Mammary epithelial cell (primary cell): ENCODE measurements at regions of chr2 and their contacts with region 1.

Region 1: GRCh38 chr2:218186355-218186766 is 19.6 kb upstream of the CXCR1 start:
- DNase-seq: peak; percentile 57
- H3K4me3 ChIP-seq: no peak overlapping the region
- H3K27ac ChIP-seq: no peak overlapping the region
- H3K4me1 ChIP-seq: peaks cover 4% of the 10 kb centered on the region
- H3K27me3 ChIP-seq: no peaks in the 10 kb centered on the region
- CTCF ChIP-seq: peak; percentile 82 to 84

Region 2: GRCh38 chr2:218130377-218130776 is 56.0 kb before region 1 on chr2:
- CTCF ChIA-PET with region 1: no interaction called
- dilution Hi-C with region 1: no loop called
- in situ Hi-C with region 1: no loop called
- intact Hi-C with region 1: no loop called
- DNase-seq: no peak
- H3K4me3 ChIP-seq: no peak overlapping the region
- H3K27ac ChIP-seq: no peak overlapping the region
- H3K4me1 ChIP-seq: peaks cover 8% of the 10 kb centered on the region
- H3K27me3 ChIP-seq: no peaks in the 10 kb centered on the region
- CTCF ChIP-seq: no peak

Region 3: GRCh38 chr2:218145125-218145524 is 41.2 kb before region 1 on chr2:
- CTCF ChIA-PET with region 1: no interaction called
- dilution Hi-C with region 1: no loop called
- in situ Hi-C with region 1: no loop called
- intact Hi-C with region 1: no loop called
- DNase-seq: no peak
- H3K4me3 ChIP-seq: no peak overlapping the region
- H3K27ac ChIP-seq: no peak overlapping the region
- H3K4me1 ChIP-seq: peaks cover 8% of the 10 kb centered on the region
- H3K27me3 ChIP-seq: no peaks in the 10 kb centered on the region
- CTCF ChIP-seq: no peak

Region 4: GRCh38 chr2:218216674-218217359 is 30.5 kb after region 1 on chr2 and contains the start of gene ARPC2:
- CTCF ChIA-PET with region 1: no interaction called
- dilution Hi-C with region 1: no loop called
- in situ Hi-C with region 1: no loop called
- intact Hi-C with region 1: loop called (anchors 2 kb)
- DNase-seq: peak; percentile 91
- H3K4me3 ChIP-seq: peak within 1 kb of the TSS; percentile 84 to 92 (median 91)
- H3K27ac ChIP-seq: peak within 1 kb of the TSS; percentile 84
- H3K4me1 ChIP-seq: peaks cover 29% of the 10 kb centered on the region
- H3K27me3 ChIP-seq: no peaks in the 10 kb centered on the region
- CTCF ChIP-seq: no peak
- total RNA-seq, gene ARPC2: 523 to 644 TPM

Region 5: GRCh38 chr2:218257390-218257981 is 71.1 kb after region 1 on chr2:
- CTCF ChIA-PET with region 1: no interaction called
- dilution Hi-C with region 1: no loop called
- in situ Hi-C with region 1: loop called (anchors 10 kb)
- intact Hi-C with region 1: loop called (anchors 1 kb)
- DNase-seq: no peak
- H3K4me3 ChIP-seq: no peak overlapping the region
- H3K27ac ChIP-seq: no peak overlapping the region
- H3K4me1 ChIP-seq: no peaks in the 10 kb centered on the region
- H3K27me3 ChIP-seq: no peaks in the 10 kb centered on the region
- CTCF ChIP-seq: peak; percentile 53 to 63

Region 6: GRCh38 chr2:218269899-218270720 is 83.7 kb after region 1 on chr2 and contains the starts of genes AAMP and PNKD:
- CTCF ChIA-PET with region 1: no interaction called
- dilution Hi-C with region 1: no loop called
- in situ Hi-C with region 1: no loop called
- intact Hi-C with region 1: loop called (anchors 1 kb)
- DNase-seq: peak; percentile 100
- H3K4me3 ChIP-seq: peak within 1 kb of the TSS; percentile 72 to 91 (median 81)
- H3K27ac ChIP-seq: peak within 1 kb of the TSS; percentile 62
- H3K4me1 ChIP-seq: peaks cover 17% of the 10 kb centered on the region
- H3K27me3 ChIP-seq: no peaks in the 10 kb centered on the region
- CTCF ChIP-seq: peak in 1 of 2 donors; percentile 36
- total RNA-seq, gene AAMP: 80.2 to 87.6 TPM
- total RNA-seq, gene PNKD: 15.7 to 29.8 TPM

Region 7: DNA sequence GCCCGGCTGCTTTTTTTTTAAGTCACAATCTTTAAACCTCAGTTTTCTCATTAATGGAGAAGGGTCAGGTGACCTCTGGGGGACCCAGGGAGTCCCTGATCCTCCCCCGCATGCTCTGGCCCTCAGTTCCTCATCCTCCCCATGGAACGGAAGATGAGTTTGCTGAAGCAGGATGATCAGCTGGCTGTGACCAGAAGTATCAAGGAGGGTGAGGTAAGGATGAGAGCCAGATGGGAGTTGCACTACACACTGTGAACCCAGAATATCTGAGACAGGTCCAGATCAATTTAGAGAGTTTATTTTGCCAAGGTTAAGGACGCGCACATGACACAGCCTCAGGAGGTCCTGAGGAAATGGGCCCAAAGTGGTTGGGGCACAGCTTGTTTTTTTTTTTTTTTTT is 174.1 kb after region 1 on chr2:
- CTCF ChIA-PET with region 1: no interaction called
- dilution Hi-C with region 1: no loop called
- in situ Hi-C with region 1: no loop called
- intact Hi-C with region 1: loop called (anchors 1 kb)
- DNase-seq: no peak
- H3K4me3 ChIP-seq: no peak overlapping the region
- H3K27ac ChIP-seq: no peak overlapping the region
- H3K4me1 ChIP-seq: no peaks in the 10 kb centered on the region
- H3K27me3 ChIP-seq: no peaks in the 10 kb centered on the region
- CTCF ChIP-seq: no peak